OCI-LY7 (cell line): ENCODE measurements at regions of chr6 and their contacts with region 1.

Region 1: DNA sequence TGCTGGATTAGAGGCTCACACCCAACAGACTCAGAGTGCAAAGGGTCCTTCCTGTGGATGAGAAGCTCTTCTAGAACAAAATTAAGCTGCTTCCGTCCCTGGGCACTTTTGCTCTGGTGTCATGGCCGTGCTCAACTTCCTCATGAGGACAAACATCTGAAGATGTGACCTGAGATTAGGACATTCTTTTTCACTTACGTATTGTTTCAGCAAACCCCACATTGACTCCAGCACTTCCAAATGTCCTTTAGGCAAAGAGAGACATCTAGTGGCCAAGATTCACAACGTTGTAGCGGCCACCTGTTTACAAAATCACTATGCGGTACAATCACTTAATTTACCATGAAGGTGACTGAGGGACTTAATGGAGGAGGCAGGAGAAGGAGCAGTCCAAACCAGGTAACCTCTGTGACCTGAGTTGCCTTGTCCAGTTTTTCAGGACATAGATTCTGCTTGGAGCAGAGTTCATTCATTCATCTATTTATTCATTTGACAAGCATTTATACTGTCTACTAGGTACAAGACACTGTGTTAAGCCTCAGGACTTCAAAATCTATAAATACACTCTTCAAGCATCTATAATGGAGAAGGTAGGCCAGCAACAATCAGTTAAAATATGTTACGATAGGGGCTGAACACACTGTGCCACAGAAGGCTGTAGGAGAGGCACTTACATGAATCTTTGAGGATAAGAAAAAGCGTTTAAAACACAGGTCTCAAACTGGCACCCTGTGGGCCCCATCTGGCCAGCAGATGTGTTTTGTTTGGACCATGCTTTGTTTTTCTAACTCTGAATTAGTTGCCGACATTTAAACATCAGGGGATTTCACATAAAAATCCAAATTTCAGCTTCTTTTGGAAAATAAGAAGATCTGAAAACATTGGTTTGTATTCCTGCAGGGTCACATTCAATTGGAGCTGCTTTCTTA is 5.6 kb upstream of the ADGRF1 start:
- DNase-seq: peak; percentile 77
- H3K4me3 ChIP-seq: no peak overlapping the region
- H3K27ac ChIP-seq: no peak overlapping the region
- H3K4me1 ChIP-seq: no peaks in the 10 kb centered on the region
- CTCF ChIP-seq: peak; percentile 90

Region 2: DNA sequence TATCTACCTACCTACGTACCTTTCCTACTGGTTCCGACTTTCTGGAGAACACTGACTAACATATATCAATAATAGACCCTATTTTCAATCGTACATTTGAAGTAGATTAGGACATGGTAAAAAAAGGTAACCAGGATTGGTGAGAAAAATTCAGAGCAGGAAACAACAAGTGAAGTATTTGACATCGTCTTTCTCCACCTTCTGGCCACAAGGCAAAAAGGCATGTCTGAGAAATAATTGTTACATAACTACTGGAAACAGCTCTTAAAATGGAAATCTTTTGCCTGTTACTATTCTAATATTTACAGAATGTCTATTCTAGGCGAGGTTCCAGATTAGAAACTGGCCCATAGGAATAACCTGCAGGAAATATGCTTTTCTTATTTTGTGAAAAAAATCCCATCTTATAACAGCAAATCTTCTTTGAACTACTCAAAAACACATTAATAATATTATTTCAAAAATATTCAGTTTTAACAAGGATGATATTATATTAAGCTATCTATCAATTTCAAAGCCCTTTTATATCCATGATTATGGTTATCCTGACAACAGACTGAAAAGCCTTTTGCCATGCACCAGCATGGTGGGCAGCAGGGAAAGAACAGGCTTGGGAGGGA is 637.3 kb before region 1 on chr6:
- CTCF ChIA-PET with region 1: no interaction called
- POLR2A ChIA-PET with region 1: no interaction called
- intact Hi-C with region 1: loop called (anchors 5 kb)
- DNase-seq: peak; percentile 63
- H3K4me3 ChIP-seq: no peak overlapping the region
- H3K27ac ChIP-seq: no peak overlapping the region
- H3K4me1 ChIP-seq: no peaks in the 10 kb centered on the region
- CTCF ChIP-seq: peak; percentile 90

Region 3: DNA sequence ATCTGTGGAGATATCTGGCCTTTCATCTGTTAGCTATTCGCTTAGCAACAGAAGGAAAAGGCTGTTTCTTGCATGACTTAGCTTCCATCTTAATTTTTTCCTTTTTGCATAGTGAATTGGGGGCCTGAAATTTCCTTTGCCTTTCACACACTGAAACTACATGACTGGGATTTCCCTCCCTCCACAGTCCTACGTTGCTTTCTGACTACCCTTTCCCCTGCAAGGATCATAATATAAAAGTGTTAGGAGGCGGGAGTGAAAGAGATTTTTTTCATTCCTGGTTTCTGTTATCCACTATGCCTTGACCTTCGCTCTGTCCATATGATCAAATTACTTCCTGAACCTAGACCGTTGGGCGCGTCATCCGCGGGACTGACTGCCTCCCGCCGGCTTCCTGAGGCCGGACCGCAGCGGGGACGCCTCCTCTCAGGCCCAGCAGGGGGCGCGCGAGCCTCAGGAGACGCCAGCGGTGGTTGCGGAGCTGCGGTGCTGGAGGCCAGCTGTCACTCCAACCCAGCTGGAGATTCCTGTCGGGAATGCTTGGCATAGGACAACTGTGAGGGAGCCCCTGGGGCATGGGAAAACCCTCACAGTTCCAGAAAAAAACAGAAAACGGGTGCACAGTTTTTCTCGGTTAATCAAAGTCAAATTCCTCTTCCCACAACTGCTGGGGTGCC is 198.9 kb before region 1 on chr6:
- CTCF ChIA-PET with region 1: no interaction called
- POLR2A ChIA-PET with region 1: no interaction called
- intact Hi-C with region 1: loop called (anchors 2 kb)
- DNase-seq: peak; percentile 57
- H3K4me3 ChIP-seq: peak overlapping the region; percentile 29
- H3K27ac ChIP-seq: no peak overlapping the region
- H3K4me1 ChIP-seq: no peaks in the 10 kb centered on the region
- CTCF ChIP-seq: peak; percentile 91

Region 4: DNA sequence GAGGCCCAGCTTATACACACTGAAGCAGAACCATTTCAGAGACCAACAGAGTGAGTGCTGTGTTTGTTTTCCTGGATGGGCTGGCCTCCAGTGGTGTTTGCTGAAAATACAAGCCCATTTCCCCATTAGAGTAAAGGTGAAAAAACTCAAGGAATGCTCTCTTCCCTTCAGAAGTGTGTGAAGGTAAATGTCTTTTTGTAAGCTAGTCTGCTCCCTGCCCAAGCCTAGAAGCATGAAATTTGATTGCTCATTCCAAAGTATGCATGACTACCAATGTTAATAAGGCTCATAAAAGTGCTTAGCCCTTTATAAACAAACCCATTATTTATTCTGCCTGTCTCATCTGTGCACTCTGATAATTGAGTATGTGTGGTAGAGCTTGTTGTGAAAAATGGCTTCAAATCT is 64.7 kb before region 1 on chr6:
- CTCF ChIA-PET with region 1: no interaction called
- POLR2A ChIA-PET with region 1: no interaction called
- intact Hi-C with region 1: loop called (anchors 10 kb)
- DNase-seq: no peak
- H3K4me3 ChIP-seq: no peak overlapping the region
- H3K27ac ChIP-seq: no peak overlapping the region
- H3K4me1 ChIP-seq: no peaks in the 10 kb centered on the region
- CTCF ChIP-seq: no peak